Activated naive CD4-positive, alpha-beta T cell treated with anti-CD3 and anti-CD28 coated beads for 36 hours (primary cell): ENCODE measurements at regions of chr10 and their contacts with region 1.

Region 1: GRCh38 chr10:10520491-10521385 is 496.9 kb upstream of the CELF2 start:
- DNase-seq: peak; percentile 43
- H3K4me3 Mint-ChIP-seq: no peak overlapping the region
- H3K27ac Mint-ChIP-seq: peak overlapping the region; percentile 76
- H3K4me1 Mint-ChIP-seq: peaks cover 13% of the 10 kb centered on the region
- H3K27me3 Mint-ChIP-seq: peaks cover 27% of the 10 kb centered on the region

Region 2: GRCh38 chr10:10418387-10418786 is 102.4 kb before region 1 on chr10:
- CTCF ChIA-PET with region 1: no interaction called
- intact Hi-C with region 1: loop called (anchors 2 kb)
- DNase-seq: peak; percentile 47
- H3K4me3 Mint-ChIP-seq: no peak overlapping the region
- H3K27ac Mint-ChIP-seq: no peak overlapping the region
- H3K4me1 Mint-ChIP-seq: peaks cover 35% of the 10 kb centered on the region
- H3K27me3 Mint-ChIP-seq: no peaks in the 10 kb centered on the region

Region 3: DNA sequence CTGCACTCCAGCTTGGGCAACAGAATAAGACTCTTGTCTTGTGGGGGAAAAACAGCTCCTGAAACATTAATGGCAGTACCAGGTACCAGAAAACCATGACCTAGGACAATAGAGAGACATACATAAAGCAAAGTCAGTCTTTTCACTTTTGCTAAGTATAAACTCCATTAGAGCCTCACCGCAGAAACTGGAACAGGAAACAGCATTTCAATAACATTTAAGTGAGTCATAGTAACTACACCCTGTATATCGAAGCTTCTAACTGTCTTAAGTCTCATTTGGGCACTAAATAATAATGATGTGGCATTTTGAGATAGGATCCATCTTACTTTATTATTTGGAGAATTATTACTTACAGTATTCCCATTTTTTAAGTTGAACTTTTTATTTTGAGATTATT is 20.9 kb before region 1 on chr10:
- CTCF ChIA-PET with region 1: no interaction called
- intact Hi-C with region 1: loop called (anchors 2 kb)
- DNase-seq: no peak
- H3K4me3 Mint-ChIP-seq: no peak overlapping the region
- H3K27ac Mint-ChIP-seq: no peak overlapping the region
- H3K4me1 Mint-ChIP-seq: no peaks in the 10 kb centered on the region
- H3K27me3 Mint-ChIP-seq: peaks cover 20% of the 10 kb centered on the region

Region 4: DNA sequence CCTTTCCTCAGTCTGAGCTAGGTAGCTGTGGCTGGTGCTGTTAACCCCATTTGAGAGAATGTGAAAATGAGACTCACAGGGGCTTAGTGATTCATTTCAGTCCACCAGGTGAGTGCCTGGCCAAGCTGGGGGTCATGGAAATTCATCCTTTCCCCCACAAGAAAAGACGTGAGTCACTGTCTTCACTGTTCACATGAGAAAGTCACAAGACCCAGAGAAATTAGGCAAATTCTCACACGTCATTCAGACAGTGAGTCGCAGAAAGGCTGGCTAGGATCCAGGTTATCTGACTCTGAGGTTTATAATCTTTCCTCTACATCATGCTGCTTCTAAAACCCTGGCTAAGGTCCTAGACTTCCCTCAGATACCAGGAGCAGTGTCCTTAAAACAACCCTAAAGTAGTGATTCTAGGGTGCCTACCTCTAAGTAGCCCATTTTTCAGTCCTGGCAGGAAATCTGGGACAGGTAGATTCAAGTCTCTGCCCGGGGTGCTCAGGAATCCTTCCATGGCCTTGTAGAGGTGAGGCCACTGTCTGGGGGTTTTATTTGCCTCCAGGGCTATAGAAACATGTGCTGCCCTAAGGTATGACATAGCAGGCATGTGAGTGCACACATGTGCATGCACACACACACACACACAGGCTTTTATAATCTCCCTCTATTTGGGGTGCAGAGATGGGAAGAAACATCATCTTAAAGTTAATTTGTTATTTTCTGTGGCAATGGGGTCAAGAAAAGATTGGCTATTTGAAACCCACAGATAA is 69.0 kb after region 1 on chr10:
- CTCF ChIA-PET with region 1: no interaction called
- intact Hi-C with region 1: loop called (anchors 1 kb)
- DNase-seq: peak; percentile 57
- H3K4me3 Mint-ChIP-seq: no peak overlapping the region
- H3K27ac Mint-ChIP-seq: no peak overlapping the region
- H3K4me1 Mint-ChIP-seq: peaks cover 6% of the 10 kb centered on the region
- H3K27me3 Mint-ChIP-seq: peaks cover 17% of the 10 kb centered on the region